Head of caudate nucleus (tissue), 42 donors: ENCODE measurements at regions of chr6 and their contacts with region 1.

Region 1: GRCh38 chr6:3281631-3282475 is 23.1 kb downstream of the PSMG4 start:
- DNase-seq: peak in 15 of 42 donors; percentile 2 to 35 (median 13)

Region 2: DNA sequence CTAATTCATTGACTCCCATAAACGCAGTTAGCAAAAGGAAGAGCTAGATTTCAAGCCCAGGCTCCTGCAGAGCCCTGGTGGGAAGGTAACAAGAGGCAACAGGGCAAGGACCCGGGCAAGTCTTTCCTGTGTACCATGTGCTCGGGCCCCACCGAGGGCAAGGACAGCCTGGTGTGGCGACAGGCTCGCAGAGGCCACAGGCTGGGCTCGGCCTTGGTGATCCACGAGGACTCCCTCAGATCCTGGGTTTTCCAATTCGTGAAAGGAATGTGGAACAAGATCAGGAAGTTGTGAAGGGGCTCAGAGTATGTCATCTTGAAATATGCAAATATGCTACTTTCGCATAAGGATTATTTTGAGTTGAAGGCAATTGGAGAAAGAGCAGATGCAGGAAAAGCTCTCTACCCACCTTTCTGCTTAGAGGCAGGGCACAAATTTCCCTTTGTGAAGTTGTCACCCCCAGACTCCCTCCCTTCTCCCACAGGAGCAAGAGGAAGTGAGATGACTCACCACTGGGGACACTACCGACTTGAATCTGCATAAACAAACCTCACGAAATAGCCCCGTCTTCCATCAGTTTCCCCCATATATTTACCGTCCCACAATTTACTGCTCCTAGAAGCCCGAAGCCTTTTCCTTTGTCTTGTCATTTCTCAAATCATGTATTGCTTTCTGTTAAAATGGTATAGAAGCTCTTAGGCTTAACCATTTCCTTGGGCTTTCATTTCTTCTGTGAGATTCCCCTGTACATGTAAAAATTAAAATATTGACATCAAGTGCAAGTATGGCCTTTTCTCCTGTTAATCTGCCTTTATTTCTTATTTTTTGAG is 55.9 kb after region 1 on chr6:
- intact Hi-C with region 1: loop called (anchors 10 kb)
- DNase-seq: peak in 5 of 42 donors; percentile 33 to 74 (median 59)

Region 3: GRCh38 chr6:3456755-3457466 is 175.1 kb after region 1 on chr6 and contains the start of gene SLC22A23:
- intact Hi-C with region 1: loop called (anchors 5 kb)
- DNase-seq: peak in 40 of 42 donors; percentile 49 to 90 (median 82)

Region 4: GRCh38 chr6:3732345-3733141 is 450.7 kb after region 1 on chr6:
- intact Hi-C with region 1: loop called (anchors 5 kb)
- DNase-seq: peak; percentile 75 to 94 (median 86)

Region 5: GRCh38 chr6:3990692-3991501 is 709.0 kb after region 1 on chr6:
- intact Hi-C with region 1: loop called (anchors 10 kb)
- DNase-seq: peak; percentile 83 to 96 (median 91)